ENCODE measurements at regions of chr1 and their contacts with region 1.

Region 1: DNA sequence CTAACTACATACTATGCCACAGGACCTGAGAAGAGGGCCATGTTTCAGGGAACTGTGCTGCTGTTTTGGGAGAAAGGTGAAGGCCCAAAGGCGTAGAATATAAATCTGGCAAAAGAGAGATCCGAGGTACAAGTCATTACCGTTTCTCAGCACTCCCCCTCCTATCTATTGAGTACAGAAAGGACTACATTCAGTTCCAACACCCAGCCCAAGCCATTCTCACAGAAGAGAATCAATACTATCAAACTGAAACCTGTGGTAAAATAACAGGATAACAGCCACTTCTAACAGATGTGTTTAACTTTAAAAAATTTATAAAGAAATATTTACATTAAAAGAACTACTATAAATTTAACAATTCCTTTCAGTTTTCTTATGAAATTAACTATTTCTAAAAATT is 7.8 kb downstream of the AHCTF1 start:
- DNase-seq: no peak

Region 2: DNA sequence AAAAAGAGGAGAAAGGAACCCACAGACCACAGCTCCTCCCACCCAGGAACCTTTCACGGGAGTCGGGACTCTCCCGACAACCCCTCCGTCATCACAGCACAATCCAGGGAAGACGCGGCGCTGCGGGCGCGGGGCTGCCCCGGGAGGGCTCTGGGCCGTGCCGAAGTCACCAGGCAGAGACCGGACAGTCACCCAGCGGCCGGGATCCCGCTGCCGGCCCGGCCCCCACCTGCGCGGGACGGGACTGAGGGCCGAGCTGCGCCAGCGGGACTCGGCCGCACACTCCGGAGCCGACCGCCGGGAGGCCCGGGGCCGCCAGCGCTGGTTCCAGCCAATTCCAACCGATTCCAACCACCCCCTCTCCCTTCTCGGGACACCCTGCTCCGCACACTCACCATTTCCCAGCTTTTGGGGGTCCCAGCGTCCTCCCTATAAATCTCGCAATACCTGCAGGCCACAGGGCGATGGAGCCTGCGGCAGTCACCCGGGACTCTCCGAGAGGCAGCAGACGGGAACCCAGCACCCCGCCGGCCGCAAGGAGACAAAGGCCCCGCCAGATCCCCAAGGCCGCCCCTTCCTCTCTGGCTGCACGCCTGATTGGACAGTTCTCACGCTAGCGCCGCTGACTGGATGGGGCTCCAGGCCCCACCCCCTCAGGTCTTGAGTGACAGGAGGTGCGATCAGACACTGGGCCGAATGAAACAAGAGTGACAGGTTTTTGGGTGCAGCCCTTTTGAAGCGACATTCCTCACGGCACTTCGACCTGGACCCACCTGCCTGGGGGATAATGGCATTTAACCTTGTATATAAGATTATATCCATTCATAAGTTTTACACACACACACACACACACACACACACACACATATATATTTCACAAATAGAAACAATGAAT is 83.9 kb after region 1 on chr1 and contains the start of gene ZNF695:
- intact Hi-C with region 1: loop called in 1 of 2 experiments (anchors 2 kb)
- DNase-seq: peak; percentile 93
- total RNA-seq, gene ZNF695: 0.23 TPM in 1 of 2 donors, not detected in the other

Region 3: DNA sequence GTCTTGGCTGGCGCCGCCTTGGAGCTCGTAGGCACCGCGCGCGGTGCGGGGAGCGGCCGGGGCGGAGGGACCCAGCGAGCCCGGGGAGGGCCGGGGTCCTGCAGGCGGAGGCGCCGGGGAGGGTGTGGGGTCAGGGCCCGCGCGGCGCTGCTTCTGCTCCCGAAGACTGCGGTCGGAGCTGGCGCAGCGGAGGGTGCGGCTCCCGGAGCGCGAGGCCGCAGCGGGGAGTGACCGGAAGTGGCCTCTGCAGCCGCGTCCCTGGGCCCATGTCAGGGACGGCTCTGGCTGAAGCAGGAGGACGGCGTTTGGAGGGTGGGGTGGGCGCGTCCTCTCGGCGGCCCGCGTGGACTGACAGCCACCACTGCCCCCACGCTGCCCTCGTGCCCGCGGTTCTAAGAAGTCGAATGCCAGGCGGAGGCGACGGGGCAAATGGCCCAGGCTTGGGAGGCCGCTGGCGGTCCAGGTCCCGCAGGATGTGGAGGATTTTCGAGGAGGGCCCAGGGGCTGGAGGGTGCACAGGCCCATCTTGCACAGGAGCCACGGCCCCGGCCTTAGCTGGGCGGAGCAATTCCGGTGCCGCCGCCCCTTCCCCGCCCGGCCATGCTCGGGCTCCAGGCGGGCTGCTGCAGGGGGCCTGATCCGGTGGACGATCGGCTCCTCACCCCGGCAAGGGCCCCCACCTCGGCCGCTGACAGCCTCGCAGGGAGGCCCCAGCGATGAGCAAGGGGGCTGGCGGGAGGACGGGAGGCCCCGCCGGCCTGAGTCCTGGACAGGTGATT is 188.0 kb after region 1 on chr1:
- intact Hi-C with region 1: no loop called
- DNase-seq: peak; percentile 92